Caco-2 (cell line): ENCODE measurements at regions of chr17 and their contacts with region 1.

Region 1: DNA sequence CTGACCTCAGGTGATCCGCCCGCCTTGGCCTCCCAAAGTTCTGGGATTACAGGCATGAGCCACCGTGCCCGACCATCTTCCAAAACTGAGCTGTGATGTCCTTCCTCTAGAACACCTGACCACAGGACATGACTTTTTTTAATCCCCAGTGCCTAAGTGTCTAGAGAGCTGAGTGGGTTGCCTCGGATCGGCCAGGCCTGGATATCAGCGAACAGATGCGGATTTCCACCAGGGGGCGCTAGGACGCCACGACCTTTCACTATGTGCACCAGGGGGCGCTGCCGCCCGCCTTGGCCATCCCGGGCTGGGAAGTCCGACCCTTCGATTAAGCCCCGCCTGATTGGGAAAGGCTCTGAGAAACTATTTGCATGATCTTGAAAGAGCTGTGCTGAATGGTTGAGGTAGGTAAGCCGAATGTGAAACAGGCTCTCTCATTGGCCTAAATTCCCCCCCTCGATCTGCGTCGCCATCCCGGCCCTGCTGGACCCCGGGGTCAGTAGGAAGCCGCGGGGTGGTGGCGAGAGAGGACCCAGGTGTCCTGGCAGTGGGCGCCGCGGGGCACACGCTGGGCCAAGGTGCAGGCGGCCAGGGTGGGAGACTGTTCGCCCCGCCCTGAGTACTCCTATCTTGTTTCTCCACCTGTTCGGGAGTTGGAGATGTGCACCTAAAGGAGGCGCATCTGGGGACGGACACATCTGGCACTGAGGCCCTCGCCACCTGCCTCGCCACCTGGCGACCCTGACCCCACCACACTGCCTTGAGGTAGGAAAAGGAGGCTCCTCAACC is at the start of gene ACBD4:
- DNase-seq: peak; percentile 97 to 98
- H3K4me3 ChIP-seq: peak within 1 kb of the TSS; percentile 56
- H3K4me3 Mint-ChIP-seq: peak within 1 kb of the TSS; percentile 81
- H3K27ac Mint-ChIP-seq: peak within 1 kb of the TSS; percentile 56
- H3K4me1 ChIP-seq: peaks cover 17% of the 10 kb centered on the region
- H3K4me1 Mint-ChIP-seq: peaks cover 11% of the 10 kb centered on the region
- H3K27me3 ChIP-seq: no peaks in the 10 kb centered on the region
- H3K27me3 Mint-ChIP-seq: no peaks in the 10 kb centered on the region
- CTCF ChIP-seq: peak; percentile 100
- total RNA-seq, gene ACBD4: 21.2 and 21.6 TPM in 2 replicates

Region 2: DNA sequence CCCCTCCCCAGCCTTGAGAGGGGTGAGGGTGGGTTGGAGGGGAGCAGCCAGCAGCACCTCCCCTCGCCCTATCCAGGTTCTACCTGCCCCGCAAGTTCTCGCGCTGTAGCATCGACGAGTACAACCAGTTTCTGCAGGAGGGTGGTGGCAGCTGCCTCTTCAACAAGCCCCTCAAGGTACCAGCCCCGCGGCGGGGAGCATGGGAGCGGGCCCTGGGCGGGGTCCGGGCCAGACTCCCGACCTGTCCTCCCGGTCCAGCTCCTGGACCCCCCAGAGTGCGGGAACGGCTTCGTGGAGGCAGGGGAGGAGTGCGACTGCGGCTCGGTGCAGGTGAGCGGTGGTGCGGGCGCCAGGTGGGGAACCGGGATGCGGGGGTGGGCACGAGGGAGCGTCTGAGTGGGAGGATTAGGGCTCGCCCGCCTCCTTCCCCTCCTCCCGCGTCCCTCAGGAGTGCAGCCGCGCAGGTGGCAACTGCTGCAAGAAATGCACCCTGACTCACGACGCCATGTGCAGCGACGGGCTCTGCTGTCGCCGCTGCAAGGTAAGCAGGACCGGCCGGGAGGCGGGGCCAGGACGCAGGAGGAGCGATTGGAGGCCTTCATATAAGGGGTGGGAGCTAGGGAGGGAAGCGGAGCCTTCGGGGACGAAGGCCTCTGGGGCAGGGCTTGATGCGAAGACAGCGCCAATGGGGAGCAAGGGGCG is 360.1 kb before region 1 on chr17:
- CTCF ChIA-PET with region 1: interaction called, 3 read pairs
- POLR2A ChIA-PET with region 1: no interaction called
- intact Hi-C with region 1: loop called (anchors 10 kb)
- DNase-seq: no peak
- H3K4me3 ChIP-seq: peak overlapping the region; percentile 84
- H3K4me3 Mint-ChIP-seq: peak overlapping the region; percentile 83
- H3K27ac Mint-ChIP-seq: peak overlapping the region; percentile 88
- H3K4me1 ChIP-seq: peaks cover 18% of the 10 kb centered on the region; the same call in 1 of the 2 replicates
- H3K4me1 Mint-ChIP-seq: no peaks in the 10 kb centered on the region
- H3K27me3 ChIP-seq: no peaks in the 10 kb centered on the region
- H3K27me3 Mint-ChIP-seq: peaks cover 3% of the 10 kb centered on the region
- CTCF ChIP-seq: no peak

Region 3: GRCh38 chr17:45098869-45099616 is 36.3 kb before region 1 on chr17:
- CTCF ChIA-PET with region 1: interaction called, 13 read pairs
- POLR2A ChIA-PET with region 1: no interaction called
- intact Hi-C with region 1: loop called (anchors 2 kb)
- DNase-seq: peak; percentile 89 to 93
- H3K4me3 ChIP-seq: no peak overlapping the region
- H3K4me3 Mint-ChIP-seq: no peak overlapping the region
- H3K27ac Mint-ChIP-seq: no peak overlapping the region
- H3K4me1 ChIP-seq: peaks cover 5% of the 10 kb centered on the region; the same call in 1 of the 2 replicates
- H3K4me1 Mint-ChIP-seq: peaks cover 7% of the 10 kb centered on the region
- H3K27me3 ChIP-seq: no peaks in the 10 kb centered on the region
- H3K27me3 Mint-ChIP-seq: no peaks in the 10 kb centered on the region
- CTCF ChIP-seq: peak; percentile 91 to 92

Region 4: GRCh38 chr17:45155029-45155428 is 19.6 kb after region 1 on chr17:
- CTCF ChIA-PET with region 1: interaction called, 230 read pairs
- POLR2A ChIA-PET with region 1: interaction called, 52 read pairs
- intact Hi-C with region 1: no loop called
- DNase-seq: no peak
- H3K4me3 ChIP-seq: no peak overlapping the region
- H3K4me3 Mint-ChIP-seq: no peak overlapping the region
- H3K27ac Mint-ChIP-seq: no peak overlapping the region
- H3K4me1 ChIP-seq: peaks cover 50% of the 10 kb centered on the region
- H3K4me1 Mint-ChIP-seq: peaks cover 30% of the 10 kb centered on the region
- H3K27me3 ChIP-seq: no peaks in the 10 kb centered on the region
- H3K27me3 Mint-ChIP-seq: no peaks in the 10 kb centered on the region
- CTCF ChIP-seq: no peak

Region 5: DNA sequence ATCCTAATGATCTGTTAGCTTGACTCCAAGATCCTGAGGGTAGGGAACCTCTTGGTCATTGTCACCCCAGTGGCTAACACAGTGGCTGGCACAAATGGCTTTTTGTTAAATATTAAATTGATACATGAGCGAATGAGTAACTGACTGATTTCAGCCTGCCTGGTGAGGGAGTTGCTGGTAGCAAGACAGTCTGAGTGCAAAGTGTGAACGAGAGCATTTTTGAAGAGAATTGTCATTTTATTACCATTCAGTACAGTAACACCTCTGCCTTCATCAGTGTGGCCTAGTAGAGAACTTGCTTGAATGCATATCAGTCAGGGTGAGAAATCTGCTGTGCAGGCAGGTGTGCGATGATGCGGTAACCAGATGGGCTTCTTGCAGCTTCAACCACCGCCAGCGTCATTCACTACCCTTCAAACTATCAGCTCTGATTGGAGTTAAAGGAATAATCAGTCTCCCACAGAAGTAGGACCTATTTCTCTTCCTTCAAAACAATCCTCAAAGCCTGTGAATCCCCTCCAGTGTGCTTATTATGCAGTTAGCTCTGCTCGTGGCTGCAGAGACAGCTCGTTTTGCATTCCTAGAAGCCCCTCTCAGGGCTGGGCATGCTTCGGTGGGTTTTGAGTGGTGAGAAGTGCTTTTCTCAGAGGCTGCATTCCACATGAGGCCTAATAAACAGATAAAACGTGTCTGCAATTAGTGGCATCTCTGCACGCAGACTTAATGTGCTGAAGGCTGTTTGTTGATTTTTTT is 55.3 kb after region 1 on chr17:
- CTCF ChIA-PET with region 1: interaction called, 18 read pairs
- POLR2A ChIA-PET with region 1: no interaction called
- intact Hi-C with region 1: no loop called
- DNase-seq: no peak
- H3K4me3 ChIP-seq: no peak overlapping the region
- H3K4me3 Mint-ChIP-seq: no peak overlapping the region
- H3K27ac Mint-ChIP-seq: no peak overlapping the region
- H3K4me1 ChIP-seq: peaks cover 14% of the 10 kb centered on the region; the same call in 1 of the 2 replicates
- H3K4me1 Mint-ChIP-seq: no peaks in the 10 kb centered on the region
- H3K27me3 ChIP-seq: no peaks in the 10 kb centered on the region
- H3K27me3 Mint-ChIP-seq: no peaks in the 10 kb centered on the region
- CTCF ChIP-seq: no peak

Region 6: GRCh38 chr17:45228763-45229539 is 93.6 kb after region 1 on chr17:
- CTCF ChIA-PET with region 1: interaction called, 25 read pairs
- POLR2A ChIA-PET with region 1: no interaction called
- intact Hi-C with region 1: no loop called
- DNase-seq: peak in 1 of 2 experiments; percentile 53
- H3K4me3 ChIP-seq: no peak overlapping the region
- H3K4me3 Mint-ChIP-seq: no peak overlapping the region
- H3K27ac Mint-ChIP-seq: no peak overlapping the region
- H3K4me1 ChIP-seq: peaks cover 18% of the 10 kb centered on the region
- H3K4me1 Mint-ChIP-seq: no peaks in the 10 kb centered on the region
- H3K27me3 ChIP-seq: no peaks in the 10 kb centered on the region
- H3K27me3 Mint-ChIP-seq: peaks cover 4% of the 10 kb centered on the region
- CTCF ChIP-seq: no peak

Region 7: DNA sequence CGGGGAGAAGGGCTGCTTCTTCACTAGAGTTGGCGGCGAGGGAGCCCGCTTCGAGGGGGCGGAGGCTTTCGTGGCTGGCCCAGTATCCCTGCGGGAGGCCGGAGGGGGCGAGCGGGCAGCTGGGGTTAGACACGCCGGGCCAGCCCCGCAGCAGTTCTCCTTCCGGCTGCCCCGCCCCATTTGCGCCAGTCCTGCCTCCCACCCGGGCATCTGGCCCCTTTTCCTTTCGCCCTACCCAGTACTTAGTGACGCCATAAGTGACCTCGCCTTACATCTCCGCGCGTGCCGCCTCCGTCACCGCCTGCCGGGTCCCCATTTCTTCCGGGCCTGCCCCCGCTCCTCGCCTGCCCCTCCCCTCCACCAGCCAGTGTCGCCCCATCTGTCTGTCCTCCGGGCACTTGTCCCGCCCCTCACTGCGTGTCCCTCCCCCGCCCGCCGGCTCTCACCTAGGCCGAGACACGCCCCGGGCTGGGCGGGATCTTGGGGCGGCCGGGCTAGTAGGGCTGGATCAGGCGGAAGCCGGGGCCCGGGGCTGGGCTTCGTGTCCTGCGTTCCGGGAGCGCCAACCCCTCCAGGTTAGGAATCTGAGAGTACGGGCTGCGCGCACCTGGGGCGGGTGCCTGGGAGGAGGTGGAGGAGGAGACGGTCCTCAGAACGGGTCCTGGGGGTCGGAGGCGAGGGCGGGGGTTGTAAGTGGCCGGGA is 112.2 kb after region 1 on chr17:
- CTCF ChIA-PET with region 1: interaction called, 13 read pairs
- POLR2A ChIA-PET with region 1: no interaction called
- intact Hi-C with region 1: no loop called
- DNase-seq: peak; percentile 99
- H3K4me3 ChIP-seq: peak overlapping the region; percentile 63
- H3K4me3 Mint-ChIP-seq: peak overlapping the region; percentile 81
- H3K27ac Mint-ChIP-seq: peak overlapping the region; percentile 92
- H3K4me1 ChIP-seq: peaks cover 11% of the 10 kb centered on the region
- H3K4me1 Mint-ChIP-seq: peaks cover 10% of the 10 kb centered on the region
- H3K27me3 ChIP-seq: no peaks in the 10 kb centered on the region
- H3K27me3 Mint-ChIP-seq: peaks cover 2% of the 10 kb centered on the region
- CTCF ChIP-seq: no peak